GM10248 (cell line): ENCODE measurements at regions of chr11 and their contacts with region 1.

Region 1: GRCh38 chr11:6757373-6757967 is 14.3 kb downstream of the OR2AG2 start:
- DNase-seq: peak; percentile 34
- CTCF ChIP-seq: peak; percentile 69

Region 2: DNA sequence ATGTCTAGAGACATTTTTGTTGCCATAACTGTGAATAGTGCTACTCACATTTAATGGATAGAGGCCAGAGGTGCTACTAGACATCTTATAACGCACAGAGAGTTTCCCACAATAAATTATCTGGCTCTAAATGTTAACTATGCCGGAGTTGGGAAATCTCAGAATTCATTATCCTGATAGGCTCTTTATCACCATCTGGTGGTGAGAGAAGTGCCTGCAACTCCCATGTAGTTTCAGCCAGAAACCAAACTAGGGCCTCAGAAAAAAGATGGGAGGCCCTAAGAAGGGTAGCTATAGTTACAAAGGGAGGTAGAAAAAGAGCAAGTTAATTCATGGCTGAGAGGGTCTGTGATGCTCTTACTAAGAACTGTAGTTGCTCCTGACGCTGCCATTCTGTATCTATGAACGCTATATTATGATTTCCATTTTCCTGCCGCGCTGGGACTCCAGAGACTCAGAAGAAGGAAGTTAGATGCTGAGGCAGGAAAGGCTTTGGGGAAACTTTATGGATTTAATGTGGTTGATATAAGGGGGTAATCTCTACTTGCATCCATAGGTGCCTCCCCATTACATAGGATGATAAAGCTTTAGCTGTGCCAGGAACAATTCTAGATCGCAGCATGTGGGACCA is 51.5 kb before region 1 on chr11:
- CTCF ChIA-PET with region 1: interaction called, 59 read pairs
- POLR2A ChIA-PET with region 1: no interaction called
- DNase-seq: peak; percentile 47
- CTCF ChIP-seq: peak; percentile 82

Region 3: GRCh38 chr11:6727971-6728760 is 29.3 kb before region 1 on chr11:
- CTCF ChIA-PET with region 1: interaction called, 259 read pairs
- POLR2A ChIA-PET with region 1: no interaction called
- DNase-seq: no peak
- CTCF ChIP-seq: no peak

Region 4: DNA sequence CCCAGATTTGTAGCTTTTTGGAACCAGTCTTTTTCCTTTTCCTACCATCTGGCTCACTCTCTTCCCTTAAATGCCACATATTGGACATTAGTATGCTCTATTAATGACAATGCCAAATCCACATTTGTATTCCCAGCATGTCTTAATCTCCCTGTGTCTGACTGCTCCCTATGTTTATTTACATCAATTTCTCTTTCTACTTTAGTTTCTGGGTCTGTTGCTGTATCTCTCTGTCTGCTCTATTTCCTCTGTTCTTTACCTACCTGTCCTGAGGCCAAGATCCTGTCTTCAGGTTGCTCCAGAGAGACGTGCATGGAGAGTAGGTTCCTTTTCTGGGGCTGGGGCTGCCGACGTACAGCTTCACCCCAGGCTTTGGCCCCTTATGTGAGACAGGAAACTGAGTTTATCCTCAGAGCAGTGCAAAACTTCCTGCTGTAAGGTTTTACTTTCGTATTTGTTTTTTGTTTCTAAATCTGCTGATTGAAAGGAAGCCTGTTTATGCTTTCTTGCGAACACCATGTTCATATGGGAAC is 11.3 kb before region 1 on chr11:
- CTCF ChIA-PET with region 1: interaction called, 259 read pairs
- POLR2A ChIA-PET with region 1: no interaction called
- DNase-seq: peak; percentile 44
- CTCF ChIP-seq: no peak

Region 5: GRCh38 chr11:6812390-6813005 is 55.0 kb after region 1 on chr11:
- CTCF ChIA-PET with region 1: interaction called, 13 read pairs
- POLR2A ChIA-PET with region 1: no interaction called
- DNase-seq: peak; percentile 73
- CTCF ChIP-seq: peak; percentile 84